Sigmoid colon (tissue), 7 donors: ENCODE measurements at regions of chr10 and their contacts with region 1.

Region 1: DNA sequence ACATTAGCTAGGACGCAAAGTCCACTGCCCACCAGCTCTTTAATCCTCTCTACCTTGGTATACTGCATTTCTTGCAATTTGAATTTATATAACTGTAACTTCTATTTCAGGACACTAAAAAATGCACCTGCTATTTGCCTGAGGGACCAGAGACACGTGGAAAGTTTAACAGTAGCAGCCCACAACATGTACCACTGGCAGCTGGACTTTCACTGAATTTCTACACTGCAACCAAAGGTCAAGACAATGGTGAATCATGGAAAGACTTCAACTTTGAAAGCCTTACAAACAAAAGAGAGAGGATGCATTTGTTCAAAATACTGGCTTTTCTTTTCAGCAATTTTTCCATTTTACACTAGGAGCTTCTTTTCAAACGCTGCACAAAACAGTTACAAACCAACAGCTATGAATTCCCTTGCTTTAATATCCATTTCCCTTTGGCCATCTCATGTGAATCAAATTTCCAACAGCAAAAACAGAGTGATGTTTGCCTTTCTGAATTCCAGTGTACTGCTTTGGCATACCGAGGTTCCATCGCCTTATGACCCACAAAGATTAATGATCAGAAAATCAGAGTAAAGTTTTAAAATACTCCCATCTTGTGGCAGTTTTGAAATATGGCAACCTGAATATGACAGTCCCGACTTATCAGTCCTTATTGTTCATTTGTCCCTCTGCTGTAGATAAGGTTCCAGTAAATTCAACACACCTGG is 29.9 kb upstream of the HNRNPH3 start:
- DNase-seq: no peak
- H3K4me3 ChIP-seq: no peak overlapping the region
- H3K27ac ChIP-seq: no peak overlapping the region
- H3K4me1 ChIP-seq: peaks cover 0 to 6% (median 4%) of the 10 kb centered on the region in 4 donors
- H3K27me3 ChIP-seq: no peaks in the 10 kb centered on the region
- CTCF ChIP-seq: peak in 3 of 4 experiments; percentile 18 to 48 (median 33)
- EP300 ChIP-seq: no peak
- POLR2A ChIP-seq: no peak

Region 2: GRCh38 chr10:68212721-68213352 is 89.1 kb before region 1 on chr10:
- intact Hi-C with region 1: loop called (anchors 2 kb)
- DNase-seq: no peak
- H3K4me3 ChIP-seq: no peak overlapping the region
- H3K27ac ChIP-seq: no peak overlapping the region
- H3K4me1 ChIP-seq: no peaks in the 10 kb centered on the region
- H3K27me3 ChIP-seq: no peaks in the 10 kb centered on the region
- CTCF ChIP-seq: peak in 3 of 4 experiments; percentile 32 to 51 (median 42)
- EP300 ChIP-seq: no peak
- POLR2A ChIP-seq: no peak